ENCODE measurements at regions of chr1 and their contacts with region 1.

Region 1: DNA sequence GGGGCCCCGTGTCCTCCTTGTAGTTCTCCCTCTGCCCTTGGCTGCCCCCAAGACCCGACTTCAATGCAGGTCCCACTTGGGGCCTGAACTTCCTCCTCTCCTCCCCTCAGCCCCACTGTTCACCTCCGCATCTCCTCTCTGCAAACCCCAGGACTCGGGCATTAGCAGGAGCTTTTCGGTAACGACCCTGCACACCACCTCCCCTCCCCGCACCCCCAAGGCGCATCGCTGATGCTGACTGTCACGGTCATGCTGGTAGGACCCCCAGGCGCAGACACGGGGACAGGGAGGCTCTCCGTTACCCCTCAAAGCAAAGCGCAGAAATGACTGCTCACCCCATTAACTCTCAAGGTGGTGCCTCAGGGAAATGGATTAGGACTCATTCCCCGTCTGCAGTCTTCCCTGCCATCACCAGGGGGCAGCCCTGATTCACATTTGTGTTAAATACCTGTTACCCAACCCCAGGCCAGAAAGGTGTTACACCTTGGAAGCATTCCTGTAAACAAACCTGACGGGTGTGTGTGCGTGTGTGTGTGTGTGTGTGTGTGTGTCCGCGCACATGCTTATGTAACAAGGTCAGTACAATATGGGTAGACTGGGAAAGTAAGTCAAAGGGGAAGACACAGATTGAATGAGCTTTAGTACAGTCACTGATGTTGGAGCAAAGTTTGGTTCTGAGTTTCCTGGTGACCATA is 6.4 kb upstream of the GUCA2B start:
- DNase-seq: peak; percentile 52 to 79 (median 57)
- ATAC-seq: peak; percentile 47 to 77 (median 60)
- H3K4me3 ChIP-seq: no peak overlapping the region
- H3K27ac ChIP-seq: no peak overlapping the region
- H3K4me1 ChIP-seq: peaks cover 0 to 6% (median 0%) of the 10 kb centered on the region in 12 donors
- H3K27me3 ChIP-seq: peaks cover 0 to 26% (median 7%) of the 10 kb centered on the region in 9 donors
- CTCF ChIP-seq: peak; percentile 57 to 83 (median 78)
- POLR2A ChIP-seq: no peak

Region 2: GRCh38 chr1:42035830-42036604 is 110.8 kb before region 1 on chr1:
- intact Hi-C with region 1: loop called in 1 of 10 experiments (anchors 10 kb)
- DNase-seq: peak; percentile 97 to 99 (median 98)
- ATAC-seq: peak; percentile 97 to 99 (median 98)
- H3K4me3 ChIP-seq: peak overlapping the region; percentile 11 to 100 (median 90)
- H3K27ac ChIP-seq: peak overlapping the region; percentile 50 to 88 (median 78)
- H3K4me1 ChIP-seq: peaks cover 0 to 20% (median 9%) of the 10 kb centered on the region in 12 donors
- H3K27me3 ChIP-seq: no peaks in the 10 kb centered on the region
- CTCF ChIP-seq: peak in 1 of 12 donors; percentile 1
- POLR2A ChIP-seq: peak in 1 of 2 donors; percentile 37

Region 3: DNA sequence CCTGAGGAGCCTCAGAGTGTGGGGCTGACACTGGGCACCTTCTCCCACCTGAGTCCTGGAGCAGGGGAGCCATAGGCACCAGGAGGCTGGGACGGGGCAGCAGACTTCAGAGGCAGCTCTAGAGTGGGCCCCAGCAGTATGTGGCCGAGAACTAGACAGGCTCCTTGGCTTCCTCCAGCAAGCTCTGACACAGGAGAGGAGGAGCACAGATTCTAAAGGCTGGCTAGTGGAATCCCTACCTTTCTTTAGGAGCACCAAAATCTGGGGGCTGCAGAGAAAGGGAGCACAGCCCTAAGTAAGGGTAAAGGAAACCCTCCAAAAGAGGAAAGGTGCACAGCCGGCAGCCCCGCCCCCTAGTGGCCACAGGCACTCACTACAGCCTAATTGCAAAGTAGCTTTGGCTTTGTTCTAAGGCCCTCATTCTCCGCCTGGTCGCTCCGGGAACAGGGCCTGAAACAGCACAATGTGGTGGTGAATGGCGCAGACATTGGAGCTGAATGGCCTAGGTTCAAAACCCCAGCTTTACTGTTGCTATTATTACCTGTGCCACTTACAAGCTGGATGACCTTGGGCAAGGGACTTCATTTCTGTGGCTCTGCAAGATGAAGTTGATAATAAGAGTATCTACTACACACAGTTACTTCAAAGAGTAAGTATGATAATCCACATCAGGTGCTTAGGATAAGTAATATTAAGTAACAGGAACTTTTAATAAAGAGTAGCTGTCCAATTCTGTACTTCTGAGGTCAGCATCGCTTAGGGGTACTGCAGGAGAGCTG is 26.6 kb after region 1 on chr1:
- intact Hi-C with region 1: loop called in 4 of 10 experiments (anchors 1 to 2 kb)
- DNase-seq: peak; percentile 58 to 80 (median 70)
- ATAC-seq: peak; percentile 42 to 63 (median 54)
- H3K4me3 ChIP-seq: no peak overlapping the region
- H3K27ac ChIP-seq: peak overlapping the region; percentile 63 to 95 (median 86)
- H3K4me1 ChIP-seq: peaks cover 8 to 48% (median 37%) of the 10 kb centered on the region in 12 donors
- H3K27me3 ChIP-seq: no peaks in the 10 kb centered on the region
- CTCF ChIP-seq: peak; percentile 91 to 99 (median 98)
- POLR2A ChIP-seq: no peak

Region 4: DNA sequence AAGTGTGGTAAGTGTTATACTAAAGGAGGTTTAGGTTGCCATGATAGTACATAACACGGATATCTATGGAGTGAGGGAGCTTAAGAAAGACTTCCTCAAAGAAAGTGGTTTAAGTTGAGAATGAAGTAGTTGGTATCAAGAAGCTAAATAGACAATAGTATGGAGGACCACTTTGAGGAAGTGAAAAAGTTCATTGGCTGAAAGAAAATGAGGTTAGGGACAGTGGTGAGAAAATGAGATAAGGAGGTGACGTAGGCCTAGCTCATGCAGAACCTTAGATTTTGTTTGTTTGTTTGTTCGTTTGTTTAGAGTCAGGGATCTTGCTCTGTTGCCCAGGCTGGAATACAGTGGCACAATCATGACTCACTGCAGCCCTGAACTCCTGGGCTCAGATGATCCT is 439.2 kb after region 1 on chr1:
- intact Hi-C with region 1: loop called in 1 of 10 experiments (anchors 10 kb)
- DNase-seq: no peak
- ATAC-seq: no peak
- H3K4me3 ChIP-seq: no peak overlapping the region
- H3K27ac ChIP-seq: no peak overlapping the region
- H3K4me1 ChIP-seq: no peaks in the 10 kb centered on the region
- H3K27me3 ChIP-seq: no peaks in the 10 kb centered on the region
- CTCF ChIP-seq: no peak
- POLR2A ChIP-seq: no peak

Region 5: DNA sequence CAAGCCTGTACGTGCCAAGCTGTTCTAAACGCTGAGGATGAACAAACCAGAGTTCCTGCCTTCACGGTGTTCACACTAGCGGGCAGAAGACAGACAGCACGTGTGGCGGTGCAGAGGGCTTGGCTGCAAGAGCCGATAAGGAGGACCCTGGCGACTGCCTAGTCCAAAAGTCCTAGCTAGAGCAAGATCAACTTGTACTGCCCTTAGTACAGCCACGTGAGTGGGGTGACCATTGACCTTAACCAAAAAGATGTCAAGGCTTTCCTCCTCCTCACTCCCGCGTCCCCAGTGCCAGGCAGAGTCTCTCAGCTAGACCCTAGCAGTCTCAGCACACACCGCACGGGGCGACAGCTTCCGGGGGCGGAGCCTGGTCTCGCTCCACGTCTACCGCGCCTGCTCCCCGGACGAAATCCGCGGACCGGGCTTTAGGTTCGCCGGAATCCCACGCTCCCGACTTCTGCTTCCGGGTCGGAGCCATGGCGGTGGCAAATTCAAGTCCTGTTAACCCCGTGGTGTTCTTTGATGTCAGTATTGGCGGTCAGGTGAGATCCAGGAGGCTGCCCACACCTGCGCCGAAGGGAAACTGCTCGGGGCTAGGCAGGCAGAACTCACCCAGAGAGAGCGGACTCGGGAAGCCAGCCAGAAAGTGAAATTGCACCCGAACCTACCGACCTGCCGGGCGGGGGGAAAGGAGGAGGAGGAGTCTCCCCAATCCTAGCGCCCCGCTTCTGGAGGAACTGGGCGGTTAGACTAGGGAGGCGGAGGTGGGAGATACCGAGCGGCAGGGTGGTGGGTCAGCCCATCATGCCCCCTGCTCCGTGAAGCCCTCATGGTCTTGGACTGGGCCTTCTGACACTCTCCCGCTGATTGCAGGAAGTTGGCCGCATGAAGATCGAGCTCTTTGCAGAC is 511.5 kb after region 1 on chr1 and contains the start of gene PPIH:
- intact Hi-C with region 1: loop called in 1 of 10 experiments (anchors 10 kb)
- DNase-seq: peak; percentile 94 to 97 (median 96)
- ATAC-seq: peak; percentile 99 to 100 (median 100)
- H3K4me3 ChIP-seq: peak within 1 kb of the TSS; percentile 66 to 91 (median 86)
- H3K27ac ChIP-seq: peak within 1 kb of the TSS; percentile 14 to 88 (median 76)
- H3K4me1 ChIP-seq: peaks cover 0 to 23% (median 14%) of the 10 kb centered on the region in 12 donors
- H3K27me3 ChIP-seq: no peaks in the 10 kb centered on the region
- CTCF ChIP-seq: peak in 9 of 12 donors; percentile 12 to 48 (median 31)
- POLR2A ChIP-seq: peak in 1 of 2 donors; percentile 36
- total RNA-seq, gene PPIH: 16.9 to 28.6 (median 19.4) TPM

Region 6: DNA sequence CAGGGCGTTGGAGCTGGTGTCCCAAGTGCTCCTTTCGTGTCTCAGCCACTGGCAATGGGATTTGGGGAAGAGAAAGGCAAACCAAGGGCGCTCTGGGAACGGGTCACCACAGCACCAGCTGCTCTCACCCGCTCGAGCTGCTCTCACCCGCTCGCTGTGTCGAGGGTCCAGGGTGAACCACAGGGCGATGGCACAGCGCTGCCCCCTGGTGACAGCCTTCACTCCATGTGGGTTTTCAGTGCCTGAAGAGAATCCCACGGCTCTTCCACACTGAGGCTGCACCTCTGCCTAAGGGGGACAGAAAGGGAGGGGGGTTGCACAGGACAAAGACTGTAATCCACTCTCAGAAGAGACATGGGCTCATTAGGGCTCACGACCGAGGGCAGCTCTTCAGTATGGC is 600.4 kb after region 1 on chr1:
- intact Hi-C with region 1: loop called in 3 of 10 experiments (anchors 5 to 10 kb)
- DNase-seq: peak in 2 of 5 donors; percentile 49 to 55
- ATAC-seq: peak in 3 of 4 donors; percentile 65 to 70 (median 68)
- H3K4me3 ChIP-seq: no peak overlapping the region
- H3K27ac ChIP-seq: no peak overlapping the region
- H3K4me1 ChIP-seq: peaks cover 0 to 19% (median 0%) of the 10 kb centered on the region in 12 donors
- H3K27me3 ChIP-seq: no peaks in the 10 kb centered on the region
- CTCF ChIP-seq: peak; percentile 47 to 72 (median 60)
- POLR2A ChIP-seq: no peak